Activated CD8-positive, alpha-beta T cell treated with anti-CD3 and anti-CD28 coated beads for 36 hours (primary cell): ENCODE measurements at regions of chr1 and their contacts with region 1.

Region 1: GRCh38 chr1:200448034-200448762 is 38.4 kb upstream of the ZNF281 start:
- DNase-seq: no peak
- ATAC-seq: peak; percentile 82
- H3K4me3 Mint-ChIP-seq: peak overlapping the region; percentile 32
- H3K27ac Mint-ChIP-seq: peak overlapping the region; percentile 94
- H3K4me1 Mint-ChIP-seq: peaks cover 34% of the 10 kb centered on the region
- H3K27me3 Mint-ChIP-seq: no peaks in the 10 kb centered on the region
- CTCF ChIP-seq: no peak

Region 2: DNA sequence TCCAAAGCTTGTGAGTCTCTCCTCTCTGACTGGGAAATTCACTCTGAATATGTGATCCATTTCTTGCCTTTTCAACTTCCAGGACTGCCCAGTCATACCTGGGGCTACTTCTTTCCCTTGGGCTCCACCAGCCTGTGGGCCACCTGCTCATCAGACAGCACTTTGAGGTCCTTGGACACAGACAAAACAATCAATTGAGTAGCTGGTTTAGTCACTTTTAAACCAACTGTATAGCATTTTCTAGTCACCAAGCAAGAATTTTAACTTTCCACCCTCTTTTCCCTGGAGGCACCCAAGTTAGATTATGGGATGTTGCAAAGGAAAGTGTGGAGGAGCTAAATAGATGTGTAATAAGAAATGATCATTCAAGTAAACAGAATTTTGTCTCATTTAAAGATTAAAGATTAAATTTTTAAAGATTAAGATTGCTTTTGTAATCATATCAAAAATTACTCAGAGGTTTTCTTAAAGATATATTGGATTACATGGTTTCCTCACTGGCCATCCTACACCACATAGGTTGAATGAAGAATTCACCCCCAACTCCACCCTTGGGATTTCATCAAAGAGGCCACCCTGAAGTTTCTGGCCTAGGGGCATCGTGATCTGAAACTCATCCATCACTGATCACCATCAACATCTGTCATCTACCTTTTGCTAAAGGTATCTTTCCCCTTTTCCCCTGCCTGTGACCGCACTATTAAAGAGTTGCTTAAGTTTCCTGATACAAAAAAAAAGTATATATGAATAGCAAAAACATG is 639.9 kb before region 1 on chr1:
- CTCF ChIA-PET with region 1: no interaction called
- POLR2A ChIA-PET with region 1: no interaction called
- intact Hi-C with region 1: no loop called
- DNase-seq: no peak
- ATAC-seq: no peak
- H3K4me3 Mint-ChIP-seq: no peak overlapping the region
- H3K27ac Mint-ChIP-seq: no peak overlapping the region
- H3K4me1 Mint-ChIP-seq: no peaks in the 10 kb centered on the region
- H3K27me3 Mint-ChIP-seq: peaks cover 20% of the 10 kb centered on the region
- CTCF ChIP-seq: no peak

Region 3: DNA sequence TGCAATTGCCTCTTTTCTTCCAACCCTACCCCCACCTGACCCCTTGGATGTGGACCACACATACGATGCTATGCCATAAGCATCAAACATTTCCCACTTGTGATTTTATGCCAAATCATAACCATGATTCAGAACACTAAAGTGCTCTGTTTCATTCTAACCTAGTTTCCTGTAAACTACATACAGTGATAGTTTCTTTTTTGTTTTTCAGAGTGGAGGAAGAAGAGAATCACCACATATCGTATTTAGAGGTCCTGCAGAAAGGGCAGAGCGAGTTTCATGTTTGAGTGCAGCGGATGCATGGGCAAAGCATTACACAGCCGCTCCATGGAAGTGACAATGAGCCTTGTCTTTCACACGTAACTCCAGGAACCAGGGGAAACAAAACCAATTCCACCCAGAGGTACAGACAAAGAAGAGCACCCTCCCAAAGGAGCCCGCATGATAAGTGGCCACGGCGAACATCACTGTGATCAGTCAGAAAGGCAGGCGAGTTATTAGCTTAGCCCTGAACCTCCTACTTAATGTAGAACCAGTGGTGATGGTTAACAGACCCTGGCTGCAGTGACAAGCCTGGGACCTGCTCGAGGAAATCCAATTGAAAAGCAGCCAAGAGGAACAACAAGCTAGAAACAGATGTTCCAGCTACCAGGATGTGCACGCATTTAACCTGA is 25.6 kb after region 1 on chr1:
- CTCF ChIA-PET with region 1: no interaction called
- POLR2A ChIA-PET with region 1: no interaction called
- intact Hi-C with region 1: loop called (anchors 1 kb)
- DNase-seq: peak; percentile 49
- ATAC-seq: peak; percentile 82
- H3K4me3 Mint-ChIP-seq: peak overlapping the region; percentile 18
- H3K27ac Mint-ChIP-seq: peak overlapping the region; percentile 40
- H3K4me1 Mint-ChIP-seq: peaks cover 35% of the 10 kb centered on the region
- H3K27me3 Mint-ChIP-seq: peaks cover 11% of the 10 kb centered on the region
- CTCF ChIP-seq: no peak